Activated T-helper 1 cell treated with anti-CD3 and anti-CD28 coated beads, Interleukin-12 subunit alpha, Interleukin-12 subunit beta, Interleukin-2, Interleukin-4 antibody, amounts not matched to agents 30 ng/mL and 10 ng/mL and 1 ng/mL, durations not matched to agents 14 hours and 24 hours and 36 hours (primary cell): ENCODE measurements at regions of chr10 and their contacts with region 1.

Region 1: DNA sequence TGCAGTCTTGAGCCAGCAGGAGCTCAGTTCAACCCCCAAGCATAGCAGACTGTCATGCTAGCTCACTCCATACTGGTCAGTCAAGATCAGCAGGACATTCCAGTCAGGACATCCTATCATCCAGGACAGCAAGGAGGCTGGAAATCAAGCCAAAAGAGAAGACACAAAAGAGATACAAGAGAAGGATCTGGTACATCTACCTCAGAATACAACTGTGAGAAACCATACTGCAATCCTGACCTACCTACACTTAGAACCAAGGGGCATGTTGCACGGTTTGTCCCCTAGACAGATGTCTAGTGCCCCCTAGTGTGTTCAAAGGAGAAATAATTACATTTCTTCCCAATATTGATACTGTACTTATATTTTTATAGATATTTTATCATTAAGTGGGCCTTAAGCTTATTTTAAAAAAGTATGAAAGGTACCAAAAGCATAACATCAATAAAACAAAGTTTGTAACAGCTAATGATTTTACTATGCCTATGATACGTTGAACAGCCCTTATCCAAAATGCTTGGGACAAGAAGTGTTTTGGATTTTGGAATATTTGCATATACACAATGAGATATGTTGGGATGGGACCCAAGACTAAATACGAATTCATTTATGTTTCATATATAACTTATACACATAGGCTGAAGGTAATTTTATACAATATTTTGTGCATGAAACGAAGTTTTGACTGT is 26.7 kb downstream of the ERCC6 start:
- DNase-seq: no peak
- H3K4me3 Mint-ChIP-seq: no peak overlapping the region
- H3K27ac Mint-ChIP-seq: no peak overlapping the region
- H3K4me1 Mint-ChIP-seq: peaks cover 18% of the 10 kb centered on the region
- H3K27me3 Mint-ChIP-seq: peaks cover 6% of the 10 kb centered on the region

Region 2: DNA sequence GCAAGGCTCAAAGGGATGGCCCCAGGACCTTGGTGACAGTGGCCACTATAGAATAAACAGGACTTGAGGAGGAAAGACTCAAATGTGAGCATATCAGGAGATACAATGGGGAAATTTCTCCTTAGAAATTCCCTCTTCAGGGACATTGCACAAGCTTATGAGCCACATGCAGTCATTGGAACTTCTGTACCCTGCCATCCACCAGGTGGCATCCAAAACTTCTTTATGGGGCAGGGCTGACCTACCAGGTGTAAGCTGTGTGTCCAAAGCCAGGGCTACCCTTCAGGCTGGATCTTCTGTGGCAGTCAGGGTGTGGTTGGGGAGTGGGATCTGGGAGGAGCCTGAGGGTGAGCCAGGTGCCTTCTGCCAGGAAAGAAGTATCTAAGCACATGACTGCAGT is 536.1 kb before region 1 on chr10:
- intact Hi-C with region 1: loop called (anchors 1 kb)
- DNase-seq: no peak
- H3K4me3 Mint-ChIP-seq: no peak overlapping the region
- H3K27ac Mint-ChIP-seq: no peak overlapping the region
- H3K4me1 Mint-ChIP-seq: no peaks in the 10 kb centered on the region
- H3K27me3 Mint-ChIP-seq: peaks cover 5% of the 10 kb centered on the region

Region 3: GRCh38 chr10:49407552-49408137 is 104.6 kb before region 1 on chr10:
- intact Hi-C with region 1: loop called (anchors 1 kb)
- DNase-seq: peak; percentile 59
- H3K4me3 Mint-ChIP-seq: no peak overlapping the region
- H3K27ac Mint-ChIP-seq: no peak overlapping the region
- H3K4me1 Mint-ChIP-seq: no peaks in the 10 kb centered on the region
- H3K27me3 Mint-ChIP-seq: peaks cover 22% of the 10 kb centered on the region

Region 4: GRCh38 chr10:49500418-49500817 is 11.8 kb before region 1 on chr10:
- intact Hi-C with region 1: no loop called
- DNase-seq: no peak
- H3K4me3 Mint-ChIP-seq: no peak overlapping the region
- H3K27ac Mint-ChIP-seq: no peak overlapping the region
- H3K4me1 Mint-ChIP-seq: no peaks in the 10 kb centered on the region
- H3K27me3 Mint-ChIP-seq: peaks cover 4% of the 10 kb centered on the region

Region 5: DNA sequence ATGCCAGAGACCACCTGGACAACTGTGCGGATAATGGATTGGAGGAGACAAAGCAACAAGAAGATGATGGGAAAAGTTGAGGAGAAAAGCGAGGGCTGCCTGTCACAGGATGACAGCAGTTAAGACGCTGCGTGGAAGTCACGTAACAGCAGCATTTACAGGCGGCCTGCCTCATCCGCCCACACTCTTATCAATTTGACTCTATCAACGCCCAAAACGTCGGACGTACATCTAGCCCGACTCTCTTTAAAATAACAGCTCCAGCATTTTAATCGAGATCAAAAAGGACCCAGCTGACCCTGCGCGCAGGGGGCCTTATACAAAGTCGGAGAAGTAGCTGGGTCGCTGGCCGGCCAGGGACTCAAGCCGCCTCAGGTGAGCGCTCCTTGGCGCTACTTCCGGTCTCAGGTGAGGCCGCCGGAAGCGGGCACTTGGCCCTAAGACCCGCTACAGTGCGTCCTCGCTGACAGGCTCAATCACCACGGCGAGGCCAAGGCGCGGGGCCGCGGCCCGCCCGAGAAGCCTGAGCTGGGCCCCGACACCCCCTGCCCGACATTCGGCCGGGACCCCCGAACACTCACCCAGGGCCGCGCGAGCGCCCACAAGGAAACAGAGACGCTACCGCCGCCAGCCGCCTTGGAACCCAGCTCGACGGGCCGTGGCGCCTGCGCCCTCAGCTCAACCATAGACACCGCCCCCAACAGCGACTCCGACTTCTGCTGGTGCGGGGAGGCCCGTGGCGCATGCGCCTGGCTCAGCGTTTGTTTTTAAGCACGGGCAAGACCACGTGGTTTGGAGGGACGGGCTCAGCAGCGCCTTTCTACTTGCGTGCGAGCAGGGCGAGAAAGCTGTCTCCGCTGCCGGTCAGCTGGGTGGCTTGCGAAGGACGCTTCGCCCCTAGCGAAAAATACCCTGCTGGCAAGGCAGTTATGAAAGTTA is 26.4 kb after region 1 on chr10 and contains the start of gene ERCC6:
- intact Hi-C with region 1: loop called (anchors 2 kb)
- DNase-seq: peak; percentile 95
- H3K4me3 Mint-ChIP-seq: peak within 1 kb of the TSS; percentile 92
- H3K27ac Mint-ChIP-seq: peak within 1 kb of the TSS; percentile 96
- H3K4me1 Mint-ChIP-seq: peaks cover 34% of the 10 kb centered on the region
- H3K27me3 Mint-ChIP-seq: peaks cover 2% of the 10 kb centered on the region
- total RNA-seq, gene ERCC6: 11.2 and 11.7 TPM in 2 replicates

Region 6: DNA sequence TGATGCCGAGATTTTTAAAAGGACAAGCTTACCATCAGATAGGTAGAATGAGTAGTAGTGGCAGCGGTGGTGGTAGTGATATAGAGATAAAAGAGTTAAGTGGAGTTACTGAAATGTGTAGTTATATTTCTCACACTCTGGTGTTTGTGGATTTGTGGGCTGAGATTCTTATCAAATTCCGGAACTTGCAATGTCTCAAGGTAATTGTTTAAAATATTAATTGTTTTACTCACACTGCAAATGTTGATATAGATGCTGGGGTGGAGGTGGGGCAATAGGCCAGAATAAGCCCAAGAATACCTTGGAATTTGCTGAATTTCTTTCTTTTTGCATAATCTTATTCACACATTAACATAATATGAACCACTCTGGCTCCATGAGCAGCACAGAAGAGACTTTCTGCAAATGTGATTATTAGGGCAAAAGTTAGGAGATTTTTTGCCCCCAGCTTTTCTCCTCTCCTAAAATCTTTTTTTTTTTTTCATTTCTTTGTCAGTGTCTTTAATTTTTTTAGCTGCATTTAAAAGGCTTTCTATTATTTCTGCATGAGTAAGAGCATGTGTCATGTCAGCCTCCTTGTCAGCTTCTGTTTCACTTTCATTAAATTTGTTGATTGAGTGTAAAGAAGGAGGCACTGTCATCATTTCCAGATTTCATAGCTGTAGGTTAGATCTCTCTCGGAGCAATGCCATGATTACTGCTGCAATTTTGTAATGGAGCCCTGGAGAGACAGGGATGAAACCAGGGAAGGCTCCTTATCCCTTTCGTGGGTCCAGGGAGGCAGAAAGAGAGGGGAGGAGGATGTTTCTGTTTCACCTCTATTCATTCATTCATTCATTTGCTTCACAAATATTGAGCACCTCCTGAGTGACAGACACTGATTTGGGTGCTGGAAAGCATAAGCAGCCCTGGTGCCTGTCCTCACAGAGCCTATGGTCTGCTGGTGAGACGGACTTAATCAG is 1124.6 kb after region 1 on chr10:
- intact Hi-C with region 1: no loop called
- DNase-seq: peak; percentile 40
- H3K4me3 Mint-ChIP-seq: peak overlapping the region; percentile 41
- H3K27ac Mint-ChIP-seq: peak overlapping the region; percentile 1
- H3K4me1 Mint-ChIP-seq: peaks cover 43% of the 10 kb centered on the region
- H3K27me3 Mint-ChIP-seq: peaks cover 29% of the 10 kb centered on the region